KBM-7 (cell line): ENCODE measurements at regions of chr16 and their contacts with region 1.

Region 1: DNA sequence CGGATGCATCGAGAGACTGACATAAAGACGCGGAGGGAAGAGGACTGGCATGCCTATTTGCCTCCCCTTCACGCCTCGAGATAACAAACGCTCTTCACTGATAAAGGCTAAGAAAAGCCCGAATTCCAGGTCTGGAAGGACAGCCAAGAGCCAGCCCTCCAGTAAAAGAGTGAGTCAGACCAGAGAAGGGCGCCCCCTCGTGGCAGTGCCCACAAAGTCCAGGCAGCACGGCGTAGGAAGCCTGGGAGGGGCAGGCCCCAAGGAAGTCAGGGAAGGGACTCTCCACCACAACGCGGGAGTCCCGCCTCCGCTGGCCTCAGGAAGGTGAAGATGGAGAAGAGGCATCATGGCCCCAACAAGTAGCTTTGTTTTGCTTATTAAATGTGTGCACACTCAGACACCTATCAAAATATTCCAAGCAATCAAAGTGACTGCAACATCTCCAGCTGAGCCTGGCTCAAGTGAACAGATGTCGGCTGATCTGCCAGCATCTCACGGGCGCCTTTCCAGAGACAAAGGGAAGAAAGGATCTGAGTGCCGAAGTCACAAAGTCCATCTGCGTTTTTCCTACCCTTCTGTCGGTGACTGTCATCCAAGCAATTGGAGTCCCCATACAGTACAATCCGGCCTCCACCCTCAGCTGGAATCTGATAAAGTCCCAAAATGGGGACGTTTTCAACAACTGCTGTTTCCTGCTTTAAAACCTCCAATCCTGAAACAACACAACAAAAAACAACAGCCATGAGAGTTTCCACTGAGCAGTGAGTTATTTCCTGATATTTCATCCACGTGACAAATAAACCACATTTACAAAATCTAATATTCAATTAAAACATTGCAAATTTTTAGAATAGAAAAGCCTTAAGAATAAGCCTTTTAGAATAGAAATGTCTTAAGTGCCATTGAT is 20.4 kb upstream of the SLC38A8 start:
- DNase-seq: peak; percentile 82

Region 2: DNA sequence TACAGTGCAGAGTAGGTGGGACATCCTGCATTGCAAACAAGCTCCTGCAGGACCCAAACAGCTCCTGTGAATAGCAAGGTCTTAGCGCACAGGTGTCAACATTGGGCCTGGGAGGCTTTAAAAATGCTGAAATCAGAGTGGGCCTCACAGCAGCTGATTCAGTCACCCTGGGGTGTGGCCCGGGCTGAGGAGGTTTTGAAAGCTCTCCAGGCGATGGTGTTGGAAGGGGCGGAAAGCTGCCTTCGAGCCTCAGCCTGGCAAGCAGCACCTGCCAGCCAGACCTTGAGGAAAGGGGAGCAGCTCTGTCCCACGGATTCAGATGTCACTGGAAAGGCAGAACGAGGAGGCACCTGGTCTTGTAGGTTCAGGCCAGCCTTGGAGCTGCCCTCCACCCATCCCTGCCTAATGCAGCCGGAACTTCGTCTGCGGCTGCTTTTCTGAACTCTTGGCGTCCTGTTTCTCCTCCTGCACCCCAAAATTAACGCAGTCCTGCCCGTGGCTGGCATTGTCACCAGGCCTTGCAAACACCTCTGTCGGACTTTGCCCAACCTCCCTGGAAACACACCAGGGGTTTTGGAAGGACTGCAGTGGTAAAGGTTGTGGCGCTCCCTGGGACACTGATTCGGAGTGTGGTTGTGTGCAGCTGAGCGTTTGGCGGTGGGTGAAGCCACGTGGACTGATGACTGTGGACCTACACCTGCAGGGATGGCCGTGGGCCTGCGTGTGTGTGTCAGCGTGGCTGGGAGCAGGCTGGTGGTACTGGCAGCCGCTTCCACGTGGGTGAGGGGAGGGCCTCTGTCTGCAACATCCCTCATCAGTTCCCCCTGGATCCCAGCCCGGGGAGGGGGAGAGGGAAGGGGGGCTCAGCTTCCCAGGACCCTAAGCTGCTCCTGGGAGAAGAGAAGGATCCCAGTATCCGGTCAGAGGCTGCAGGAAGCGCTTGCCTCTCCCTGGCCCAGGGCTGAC is 91.5 kb before region 1 on chr16:
- in situ Hi-C with region 1: loop called (anchors 10 kb)
- DNase-seq: no peak